Left cardiac atrium (tissue), 4 donors: ENCODE measurements at regions of chr7 and their contacts with region 1.

Region 1: GRCh38 chr7:39948956-39949928 is 814 bp upstream of the CDK13 start:
- DNase-seq: peak; percentile 99
- ATAC-seq: peak; percentile 89 to 94

Region 2: GRCh38 chr7:39589323-39590111 is 359.7 kb before region 1 on chr7:
- intact Hi-C with region 1: no loop called
- DNase-seq: no peak
- ATAC-seq: peak; percentile 34 to 77

Region 3: GRCh38 chr7:39825401-39825980 is 123.8 kb before region 1 on chr7:
- intact Hi-C with region 1: no loop called
- DNase-seq: no peak
- ATAC-seq: no peak

Region 4: DNA sequence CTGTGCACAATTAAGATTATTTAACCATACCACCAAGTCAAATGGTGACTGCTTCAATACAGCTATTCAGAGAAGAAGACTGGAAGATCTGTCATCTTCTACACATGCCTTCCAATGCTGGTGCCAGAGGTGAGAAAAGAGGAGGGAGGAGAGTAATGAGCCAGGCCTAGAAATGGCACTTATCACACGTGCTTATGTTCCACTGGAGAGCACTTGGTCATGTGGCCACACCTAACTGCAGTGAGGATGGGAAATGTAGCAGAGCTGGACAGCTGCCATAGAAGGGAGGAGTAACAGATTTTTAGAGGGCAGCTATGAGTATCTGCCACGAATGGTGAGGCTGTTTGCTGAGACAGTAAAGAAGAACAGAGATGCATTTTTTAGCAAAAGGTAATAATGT is 108.0 kb after region 1 on chr7:
- intact Hi-C with region 1: loop called in 1 of 2 experiments (anchors 2 kb)
- DNase-seq: peak; percentile 46
- ATAC-seq: peak; percentile 52 to 86